ENCODE measurements at regions of chr20 and their contacts with region 1.

Region 1: GRCh38 chr20:31560094-31560899 is 44.8 kb upstream of the ID1 start:
- DNase-seq: no peak
- ATAC-seq: peak; percentile 83
- H3K4me3 ChIP-seq: no peak overlapping the region
- H3K27ac ChIP-seq: peak overlapping the region; percentile 15; the same call in 1 of the 2 replicates
- H3K4me1 ChIP-seq: no peaks in the 10 kb centered on the region
- H3K27me3 ChIP-seq: no peaks in the 10 kb centered on the region
- CTCF ChIP-seq: peak; percentile 76 to 94 (median 83)
- EP300 ChIP-seq: no peak
- POLR2A ChIP-seq: 0 out of 2 replicates have a peak, but pooled peaks have one; percentile 20
- RAD21 ChIP-seq: peak; percentile 43

Region 2: GRCh38 chr20:31425797-31426196 is 134.5 kb before region 1 on chr20:
- CTCF ChIA-PET with region 1: no interaction called
- POLR2A ChIA-PET with region 1: no interaction called
- RAD21 ChIA-PET with region 1: no interaction called
- SMC1A ChIA-PET with region 1: no interaction called
- in situ Hi-C with region 1: no loop called
- intact Hi-C with region 1: no loop called
- DNase-seq: no peak
- ATAC-seq: no peak
- H3K4me3 ChIP-seq: no peak overlapping the region
- H3K27ac ChIP-seq: no peak overlapping the region
- H3K4me1 ChIP-seq: no peaks in the 10 kb centered on the region
- H3K27me3 ChIP-seq: no peaks in the 10 kb centered on the region
- CTCF ChIP-seq: no peak
- EP300 ChIP-seq: no peak
- POLR2A ChIP-seq: no peak
- RAD21 ChIP-seq: no peak

Region 3: DNA sequence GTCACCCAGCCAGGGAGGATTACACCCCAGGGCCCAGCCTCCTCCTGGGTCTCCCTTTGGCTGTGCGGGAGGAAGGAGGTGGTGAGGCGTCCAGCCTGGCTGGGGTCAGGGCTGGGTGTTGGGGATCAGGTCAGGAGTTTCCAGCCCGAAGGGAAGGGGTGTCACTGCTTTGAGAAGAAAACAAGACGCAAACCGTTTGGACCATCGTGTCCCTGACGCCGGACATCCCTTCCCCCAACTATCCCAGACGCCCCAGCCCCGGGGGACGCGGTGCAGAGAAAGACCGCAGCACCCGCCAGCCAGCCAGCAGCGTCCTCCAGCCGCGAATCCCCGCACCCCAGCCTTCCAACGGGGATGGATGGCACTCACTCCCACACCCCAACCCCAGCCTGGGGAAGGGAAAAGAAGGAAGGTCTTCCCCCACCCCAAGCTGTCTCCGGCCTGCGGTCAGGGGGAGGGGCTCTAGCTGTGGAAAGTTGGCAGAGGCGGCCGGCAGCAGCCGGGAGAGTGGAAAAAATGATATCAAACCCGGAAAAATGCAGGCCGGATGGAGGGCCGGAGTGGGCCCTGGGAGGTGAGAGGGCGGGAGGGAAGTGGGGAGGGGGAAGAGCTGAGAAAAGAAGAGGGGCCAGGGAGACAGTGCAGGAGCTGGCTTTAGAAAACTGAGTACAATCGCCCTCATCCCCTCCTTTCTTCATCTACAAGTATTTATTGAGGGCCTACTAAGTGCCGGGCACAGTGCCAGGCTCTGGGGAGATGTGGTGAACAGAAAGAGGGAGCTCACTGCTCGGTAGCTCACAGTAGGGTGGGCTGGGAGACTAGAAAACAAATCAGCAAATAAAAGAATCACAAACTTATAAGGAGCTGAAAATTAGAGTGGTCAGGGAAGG is 74.6 kb before region 1 on chr20:
- CTCF ChIA-PET with region 1: no interaction called
- POLR2A ChIA-PET with region 1: no interaction called
- RAD21 ChIA-PET with region 1: no interaction called
- SMC1A ChIA-PET with region 1: no interaction called
- in situ Hi-C with region 1: no loop called
- intact Hi-C with region 1: no loop called
- DNase-seq: no peak
- ATAC-seq: no peak
- H3K4me3 ChIP-seq: no peak overlapping the region
- H3K27ac ChIP-seq: no peak overlapping the region
- H3K4me1 ChIP-seq: no peaks in the 10 kb centered on the region
- H3K27me3 ChIP-seq: peaks cover 1 to 2% of the 10 kb centered on the region in 2 experiments; a peak in 3 of 4 replicates
- CTCF ChIP-seq: no peak
- EP300 ChIP-seq: no peak
- POLR2A ChIP-seq: no peak
- RAD21 ChIP-seq: no peak

Region 4: GRCh38 chr20:31535298-31535697 is 25.0 kb before region 1 on chr20:
- CTCF ChIA-PET with region 1: no interaction called
- POLR2A ChIA-PET with region 1: no interaction called
- RAD21 ChIA-PET with region 1: no interaction called
- SMC1A ChIA-PET with region 1: no interaction called
- in situ Hi-C with region 1: no loop called
- intact Hi-C with region 1: no loop called
- DNase-seq: no peak
- ATAC-seq: no peak
- H3K4me3 ChIP-seq: no peak overlapping the region
- H3K27ac ChIP-seq: no peak overlapping the region
- H3K4me1 ChIP-seq: no peaks in the 10 kb centered on the region
- H3K27me3 ChIP-seq: no peaks in the 10 kb centered on the region
- CTCF ChIP-seq: no peak
- EP300 ChIP-seq: no peak
- POLR2A ChIP-seq: no peak
- RAD21 ChIP-seq: no peak

Region 5: GRCh38 chr20:31547017-31547675 is 13.2 kb before region 1 on chr20:
- CTCF ChIA-PET with region 1: interaction called, 56 read pairs
- POLR2A ChIA-PET with region 1: no interaction called
- RAD21 ChIA-PET with region 1: interaction called, 5 read pairs
- SMC1A ChIA-PET with region 1: interaction called, 5 read pairs
- in situ Hi-C with region 1: no loop called
- intact Hi-C with region 1: no loop called
- DNase-seq: peak; percentile 57
- ATAC-seq: peak; percentile 89
- H3K4me3 ChIP-seq: peak overlapping the region; percentile 73
- H3K27ac ChIP-seq: peak overlapping the region; percentile 62
- H3K4me1 ChIP-seq: no peaks in the 10 kb centered on the region
- H3K27me3 ChIP-seq: no peaks in the 10 kb centered on the region
- CTCF ChIP-seq: no peak
- EP300 ChIP-seq: no peak
- POLR2A ChIP-seq: peak; percentile 88
- RAD21 ChIP-seq: no peak

Region 6: DNA sequence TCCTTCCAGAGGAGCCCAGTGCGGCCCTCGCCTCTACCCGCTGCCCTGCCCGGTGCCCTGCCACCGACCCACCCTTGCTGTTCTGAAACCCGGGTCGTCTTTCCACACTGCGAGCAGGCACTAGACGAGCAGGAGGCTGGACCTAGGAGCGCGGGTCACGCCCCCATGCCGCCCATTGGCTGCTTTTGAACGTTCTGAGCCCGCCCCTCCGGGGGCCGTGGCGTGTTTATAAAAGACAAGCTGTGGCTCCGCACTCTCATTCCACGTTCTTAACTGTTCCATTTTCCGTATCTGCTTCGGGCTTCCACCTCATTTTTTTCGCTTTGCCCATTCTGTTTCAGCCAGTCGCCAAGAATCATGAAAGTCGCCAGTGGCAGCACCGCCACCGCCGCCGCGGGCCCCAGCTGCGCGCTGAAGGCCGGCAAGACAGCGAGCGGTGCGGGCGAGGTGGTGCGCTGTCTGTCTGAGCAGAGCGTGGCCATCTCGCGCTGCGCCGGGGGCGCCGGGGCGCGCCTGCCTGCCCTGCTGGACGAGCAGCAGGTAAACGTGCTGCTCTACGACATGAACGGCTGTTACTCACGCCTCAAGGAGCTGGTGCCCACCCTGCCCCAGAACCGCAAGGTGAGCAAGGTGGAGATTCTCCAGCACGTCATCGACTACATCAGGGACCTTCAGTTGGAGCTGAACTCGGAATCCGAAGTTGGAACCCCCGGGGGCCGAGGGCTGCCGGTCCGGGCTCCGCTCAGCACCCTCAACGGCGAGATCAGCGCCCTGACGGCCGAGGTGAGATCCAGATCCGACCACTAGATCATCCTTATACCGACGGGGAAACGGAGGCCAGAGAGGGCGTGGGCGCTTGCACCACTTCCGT is 45.0 kb after region 1 on chr20 and contains the start of gene ID1:
- CTCF ChIA-PET with region 1: interaction called, 958 read pairs
- POLR2A ChIA-PET with region 1: no interaction called
- RAD21 ChIA-PET with region 1: interaction called, 126 read pairs
- SMC1A ChIA-PET with region 1: interaction called, 83 read pairs
- in situ Hi-C with region 1: no loop called
- intact Hi-C with region 1: no loop called
- DNase-seq: no peak
- ATAC-seq: peak; percentile 94
- H3K4me3 ChIP-seq: peak within 1 kb of the TSS; percentile 64
- H3K27ac ChIP-seq: no peak within 1 kb of the TSS
- H3K4me1 ChIP-seq: peaks cover 21% of the 10 kb centered on the region
- H3K27me3 ChIP-seq: peaks cover 10 to 18% of the 10 kb centered on the region in 2 experiments
- CTCF ChIP-seq: no peak
- EP300 ChIP-seq: no peak
- POLR2A ChIP-seq: peak; percentile 76
- RAD21 ChIP-seq: no peak
- polyA plus RNA-seq, gene ID1: 0.09 TPM in 1 of 2 experiments, not detected in the other